ENCODE measurements at regions of chr2 and their contacts with region 1.

Region 1: GRCh38 chr2:201071479-201072200 is at the starts of genes HYCC2 and NDUFB3:
- DNase-seq: peak; percentile 96
- H3K4me3 ChIP-seq: peak within 1 kb of the TSS; percentile 84 to 99 (median 93)
- H3K27ac ChIP-seq: peak within 1 kb of the TSS; percentile 87 to 90 (median 88)
- H3K4me1 ChIP-seq: peaks cover 0 to 61% (median 48%) of the 10 kb centered on the region in 4 donors
- H3K27me3 ChIP-seq: no peaks in the 10 kb centered on the region
- CTCF ChIP-seq: peak in 1 of 4 experiments; percentile 10
- EP300 ChIP-seq: no peak
- POLR2A ChIP-seq: peak; percentile 73 to 83
- total RNA-seq, gene HYCC2: 13.6 to 20.2 (median 18.7) TPM
- total RNA-seq, gene NDUFB3: 85.3 to 97.9 (median 89.8) TPM

Region 2: GRCh38 chr2:200713003-200713703 is 358.5 kb before region 1 on chr2:
- intact Hi-C with region 1: loop called (anchors 5 kb)
- DNase-seq: peak; percentile 89
- H3K4me3 ChIP-seq: peak overlapping the region; percentile 28 to 50 (median 47)
- H3K27ac ChIP-seq: peak overlapping the region; percentile 50 to 74 (median 67)
- H3K4me1 ChIP-seq: peaks cover 0 to 5% (median 2%) of the 10 kb centered on the region in 4 donors
- H3K27me3 ChIP-seq: no peaks in the 10 kb centered on the region
- CTCF ChIP-seq: peak in 3 of 4 experiments; percentile 59 to 77 (median 63)
- EP300 ChIP-seq: no peak
- POLR2A ChIP-seq: peak in 1 of 2 donors; percentile 30

Region 3: GRCh38 chr2:200888704-200889625 is 182.7 kb before region 1 on chr2 and contains the starts of genes NIF3L1 and PPIL3:
- intact Hi-C with region 1: loop called (anchors 5 kb)
- DNase-seq: peak; percentile 98
- H3K4me3 ChIP-seq: peak within 1 kb of the TSS; percentile 62 to 76 (median 73)
- H3K27ac ChIP-seq: peak within 1 kb of the TSS; percentile 93 to 96 (median 94)
- H3K4me1 ChIP-seq: peaks cover 0 to 33% (median 20%) of the 10 kb centered on the region in 4 donors
- H3K27me3 ChIP-seq: no peaks in the 10 kb centered on the region
- CTCF ChIP-seq: no peak
- EP300 ChIP-seq: peak in 2 of 4 donors; percentile 19 to 35
- POLR2A ChIP-seq: peak in 1 of 2 donors; percentile 49
- total RNA-seq, gene NIF3L1: 9.8 to 23.5 (median 15.9) TPM
- total RNA-seq, gene PPIL3: 11.8 to 116 (median 22.2) TPM

Region 4: GRCh38 chr2:200963124-200963917 is 108.3 kb before region 1 on chr2 and contains the start of gene ORC2:
- intact Hi-C with region 1: loop called (anchors 2 kb)
- DNase-seq: peak; percentile 97
- H3K4me3 ChIP-seq: peak within 1 kb of the TSS; percentile 71 to 98 (median 91)
- H3K27ac ChIP-seq: peak within 1 kb of the TSS; percentile 84 to 96 (median 90)
- H3K4me1 ChIP-seq: peaks cover 0 to 28% (median 16%) of the 10 kb centered on the region in 4 donors
- H3K27me3 ChIP-seq: no peaks in the 10 kb centered on the region
- CTCF ChIP-seq: peak; percentile 61 to 78 (median 70)
- EP300 ChIP-seq: no peak
- POLR2A ChIP-seq: no peak
- total RNA-seq, gene ORC2: 12.9 to 19.3 (median 15.7) TPM

Region 5: DNA sequence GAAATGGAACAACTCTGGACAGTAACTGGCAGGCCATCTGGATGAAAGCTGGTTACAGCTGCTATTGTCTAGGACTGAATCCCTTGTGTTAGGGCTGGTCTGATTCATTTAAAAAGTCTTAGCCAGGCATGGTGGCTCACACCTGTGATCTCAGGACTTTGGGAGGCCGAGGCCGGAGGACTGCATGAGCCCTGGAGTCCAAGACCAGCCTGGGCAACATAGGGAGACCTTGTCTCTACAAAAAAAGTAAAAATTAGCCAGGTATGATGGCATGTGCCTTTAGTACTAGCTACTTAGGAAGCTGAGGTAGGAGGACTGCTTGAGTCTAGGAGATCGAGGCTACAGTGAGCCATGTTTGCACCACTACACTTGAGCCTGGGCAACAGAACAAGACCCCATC is 28.9 kb after region 1 on chr2:
- intact Hi-C with region 1: no loop called
- DNase-seq: no peak
- H3K4me3 ChIP-seq: no peak overlapping the region
- H3K27ac ChIP-seq: no peak overlapping the region
- H3K4me1 ChIP-seq: no peaks in the 10 kb centered on the region
- H3K27me3 ChIP-seq: no peaks in the 10 kb centered on the region
- CTCF ChIP-seq: no peak
- EP300 ChIP-seq: no peak
- POLR2A ChIP-seq: no peak

Region 6: GRCh38 chr2:201158111-201158929 is 86.7 kb after region 1 on chr2:
- intact Hi-C with region 1: loop called (anchors 5 kb)
- DNase-seq: peak; percentile 75
- H3K4me3 ChIP-seq: no peak overlapping the region
- H3K27ac ChIP-seq: peak overlapping the region; percentile 35 to 60 (median 38)
- H3K4me1 ChIP-seq: peaks cover 0 to 20% (median 11%) of the 10 kb centered on the region in 4 donors
- H3K27me3 ChIP-seq: no peaks in the 10 kb centered on the region
- CTCF ChIP-seq: peak; percentile 16 to 70 (median 51)
- EP300 ChIP-seq: no peak
- POLR2A ChIP-seq: no peak

Measured in sigmoid colon (tissue), 7 donors.